Dendritic cell treated with granulocyte-macrophage colony-stimulating factor and Interleukin-4, amounts not matched to agents 40 ng/mL and 50 ng/mL, for 4 days (primary cell): ENCODE measurements at regions of chr7 and their contacts with region 1.

Region 1: DNA sequence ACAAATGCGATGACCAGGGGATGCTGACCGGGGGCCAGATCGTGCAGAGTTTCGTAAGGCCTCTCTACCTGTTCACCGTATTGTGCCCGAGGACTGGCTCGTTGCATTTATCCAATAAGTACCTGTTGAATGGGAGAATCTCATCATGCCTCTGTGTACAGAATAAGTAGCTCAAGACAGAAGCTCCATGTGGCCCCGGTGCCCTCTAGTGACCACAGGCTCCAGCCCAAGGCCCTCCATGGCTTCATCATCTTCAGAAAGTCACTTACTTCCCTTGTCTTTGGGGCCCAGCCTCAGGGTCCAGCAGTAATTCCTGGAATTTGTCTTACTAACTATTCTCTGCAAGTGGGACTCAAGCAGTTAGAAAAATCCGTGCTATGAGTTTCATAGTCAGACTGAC is 151.0 kb downstream of the CHN2 start:
- H3K4me3 Mint-ChIP-seq: no peak overlapping the region
- H3K27ac Mint-ChIP-seq: no peak overlapping the region
- H3K4me1 Mint-ChIP-seq: peaks cover 8% of the 10 kb centered on the region
- H3K27me3 Mint-ChIP-seq: no peaks in the 10 kb centered on the region

Region 2: DNA sequence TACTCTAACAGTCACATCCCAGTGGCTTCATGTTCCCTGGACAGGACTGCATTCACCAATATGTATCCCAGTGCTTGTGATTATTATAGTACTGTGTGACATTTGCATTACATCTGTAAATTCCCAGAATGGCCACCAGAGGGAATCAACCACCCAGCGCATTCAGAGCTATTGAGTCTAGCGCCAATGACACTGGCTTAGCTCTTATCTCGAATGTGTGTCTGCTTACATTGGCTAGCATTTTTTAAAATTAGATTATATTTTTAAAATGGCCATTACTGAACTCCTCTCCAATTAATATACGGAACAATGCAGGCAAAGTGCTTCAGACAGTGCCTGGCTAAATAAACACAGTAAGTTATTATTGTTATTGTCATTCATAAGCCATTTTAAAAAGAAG is 423.8 kb before region 1 on chr7:
- intact Hi-C with region 1: loop called (anchors 5 kb)
- H3K4me3 Mint-ChIP-seq: no peak overlapping the region
- H3K27ac Mint-ChIP-seq: no peak overlapping the region
- H3K4me1 Mint-ChIP-seq: peaks cover 21% of the 10 kb centered on the region
- H3K27me3 Mint-ChIP-seq: peaks cover 20% of the 10 kb centered on the region

Region 3: GRCh38 chr7:29113384-29114103 is 232.1 kb before region 1 on chr7:
- intact Hi-C with region 1: loop called (anchors 10 kb)
- H3K4me3 Mint-ChIP-seq: peak overlapping the region; percentile 2
- H3K27ac Mint-ChIP-seq: peak overlapping the region; percentile 59
- H3K4me1 Mint-ChIP-seq: peaks cover 77% of the 10 kb centered on the region
- H3K27me3 Mint-ChIP-seq: no peaks in the 10 kb centered on the region

Region 4: DNA sequence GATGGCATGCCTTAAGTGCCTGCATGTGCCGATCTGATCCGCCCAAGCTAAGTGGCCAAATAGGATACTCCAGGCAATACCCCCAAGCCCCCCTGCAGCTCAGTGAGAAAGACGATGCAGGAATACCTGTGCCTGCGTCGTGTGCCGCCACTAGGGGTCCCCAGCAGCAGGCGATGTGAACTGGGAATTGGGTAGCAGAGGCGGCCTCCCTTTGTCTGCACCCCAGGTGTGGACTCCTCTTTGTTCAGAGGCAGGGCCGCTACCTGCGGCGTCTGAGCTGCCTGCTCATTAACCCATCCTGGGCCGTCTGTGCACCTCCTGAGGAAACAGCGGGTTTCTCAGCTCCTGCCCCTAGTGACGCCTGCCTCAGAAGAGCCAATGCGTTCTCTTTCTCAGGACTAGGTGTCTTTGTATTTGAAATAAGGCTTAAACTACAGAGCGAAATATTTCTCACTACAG is 155.8 kb before region 1 on chr7:
- intact Hi-C with region 1: loop called (anchors 5 kb)
- H3K4me3 Mint-ChIP-seq: no peak overlapping the region
- H3K27ac Mint-ChIP-seq: no peak overlapping the region
- H3K4me1 Mint-ChIP-seq: peaks cover 34% of the 10 kb centered on the region
- H3K27me3 Mint-ChIP-seq: peaks cover 20% of the 10 kb centered on the region

Region 5: GRCh38 chr7:29239638-29240037 is 106.0 kb before region 1 on chr7:
- intact Hi-C with region 1: loop called (anchors 10 kb)
- H3K4me3 Mint-ChIP-seq: no peak overlapping the region
- H3K27ac Mint-ChIP-seq: no peak overlapping the region
- H3K4me1 Mint-ChIP-seq: peaks cover 47% of the 10 kb centered on the region
- H3K27me3 Mint-ChIP-seq: no peaks in the 10 kb centered on the region

Region 6: DNA sequence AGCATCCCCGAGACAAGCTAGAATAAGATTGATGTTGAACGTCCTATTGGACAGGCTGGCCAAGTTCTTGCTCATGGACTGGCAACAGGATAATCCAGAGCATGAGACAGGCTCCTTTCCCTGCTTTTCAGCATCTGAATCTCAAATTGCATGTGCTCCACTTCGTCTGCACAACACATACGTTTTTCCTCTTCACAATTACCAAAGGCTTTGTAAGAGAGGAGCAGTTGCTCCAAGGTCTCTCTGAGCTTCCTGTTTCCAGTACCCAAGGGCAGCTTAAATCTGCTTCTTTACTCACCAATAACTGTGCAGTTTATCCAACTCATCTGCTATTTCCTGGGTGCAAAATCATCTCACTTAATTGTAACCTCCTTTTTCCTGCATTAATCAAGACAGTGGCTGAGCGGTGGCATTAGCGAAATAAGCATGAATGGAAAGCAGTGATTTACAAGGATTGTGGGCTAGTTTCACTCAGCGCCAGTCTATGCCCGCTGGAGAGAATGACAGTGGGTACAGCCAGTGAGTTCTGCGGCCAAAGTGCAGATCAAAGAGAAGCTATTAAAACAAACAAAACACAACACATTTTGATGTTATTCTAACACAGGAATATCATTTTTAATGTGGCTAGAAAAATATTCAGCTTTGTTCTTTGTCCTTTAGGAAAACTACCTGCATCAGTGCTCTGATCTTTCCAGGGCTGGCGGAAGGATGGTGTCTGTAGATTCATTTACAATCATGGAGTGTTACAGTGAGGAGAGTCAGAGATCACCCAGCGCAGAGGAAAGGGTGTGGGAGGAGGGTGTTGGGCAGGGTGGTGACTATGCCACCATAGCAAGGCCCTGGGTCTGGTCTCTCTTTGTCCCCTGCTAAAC is 71.2 kb before region 1 on chr7:
- intact Hi-C with region 1: no loop called
- H3K4me3 Mint-ChIP-seq: no peak overlapping the region
- H3K27ac Mint-ChIP-seq: no peak overlapping the region
- H3K4me1 Mint-ChIP-seq: peaks cover 65% of the 10 kb centered on the region
- H3K27me3 Mint-ChIP-seq: no peaks in the 10 kb centered on the region

Region 7: DNA sequence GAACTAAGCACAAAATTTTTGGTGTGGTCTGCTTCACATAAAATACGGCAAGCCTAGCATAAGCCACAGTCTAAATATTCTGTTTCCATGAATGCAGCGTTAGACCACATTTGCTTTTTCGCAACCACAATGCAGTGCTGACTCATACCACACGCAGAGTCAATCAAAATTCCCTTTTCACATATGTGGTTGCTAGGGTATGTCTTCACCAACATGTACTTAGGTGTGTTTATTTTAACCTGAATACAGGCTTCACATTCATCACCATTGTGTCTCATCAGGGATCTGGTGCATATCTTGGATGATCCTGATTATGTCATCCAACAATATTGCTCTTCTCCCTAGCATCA is 60.2 kb before region 1 on chr7:
- intact Hi-C with region 1: loop called (anchors 5 kb)
- H3K4me3 Mint-ChIP-seq: no peak overlapping the region
- H3K27ac Mint-ChIP-seq: peak overlapping the region; percentile 75
- H3K4me1 Mint-ChIP-seq: peaks cover 83% of the 10 kb centered on the region
- H3K27me3 Mint-ChIP-seq: no peaks in the 10 kb centered on the region